SK-N-SH (cell line): ENCODE measurements at regions of chr2 and their contacts with region 1.

Region 1: DNA sequence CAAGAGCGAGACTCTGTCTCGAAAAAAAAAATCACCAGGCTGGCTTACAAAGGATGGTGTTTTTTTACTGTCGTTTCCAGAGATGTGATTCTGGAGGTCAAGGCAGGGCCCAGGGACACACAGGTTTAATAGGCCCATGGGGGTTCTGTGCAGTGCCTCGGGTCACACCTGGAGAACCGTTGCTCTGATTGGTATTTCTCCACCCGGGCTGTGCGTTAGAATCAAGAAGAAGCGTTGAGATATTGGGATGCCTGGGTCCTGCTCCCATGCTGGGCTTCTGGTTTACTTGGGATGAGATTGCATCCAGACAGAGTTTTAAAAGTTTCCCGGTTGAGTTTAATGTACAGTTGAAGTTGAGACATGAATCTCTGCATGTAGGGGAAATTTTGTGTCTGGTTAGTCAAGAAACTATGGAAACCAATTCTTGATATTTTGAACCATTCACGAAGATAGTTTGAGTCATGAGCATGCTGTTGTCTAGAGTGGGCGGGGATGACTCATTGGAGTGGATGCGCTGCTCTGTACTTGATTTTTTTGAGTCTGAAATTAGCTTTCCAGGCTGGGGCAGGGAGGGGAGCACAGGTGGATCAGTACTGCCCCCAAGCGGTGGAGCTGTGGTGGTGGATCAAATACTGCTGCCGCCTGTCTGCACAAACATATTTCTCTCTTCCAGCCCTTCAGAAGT is 50.1 kb downstream of the GREB1 start:
- DNase-seq: peak; percentile 95
- H3K4me3 ChIP-seq: no peak overlapping the region; a peak in 1 of 4 replicates
- H3K27ac ChIP-seq: peak overlapping the region in 1 of 2 experiments; percentile 80; a peak in 2 of 4 replicates
- H3K4me1 ChIP-seq: no peaks in the 10 kb centered on the region; a peak in 2 of 4 replicates
- H3K27me3 ChIP-seq: no peaks in the 10 kb centered on the region
- CTCF ChIP-seq: peak; percentile 100
- EP300 ChIP-seq: peak in 1 of 2 experiments; percentile 12; a peak in 1 of 4 replicates
- RAD21 ChIP-seq: peak; percentile 100

Region 2: GRCh38 chr2:10750610-10751009 is 833.4 kb before region 1 on chr2:
- CTCF ChIA-PET with region 1: no interaction called
- POLR2A ChIA-PET with region 1: no interaction called
- DNase-seq: no peak
- H3K4me3 ChIP-seq: no peak overlapping the region
- H3K27ac ChIP-seq: no peak overlapping the region
- H3K4me1 ChIP-seq: no peaks in the 10 kb centered on the region
- H3K27me3 ChIP-seq: no peaks in the 10 kb centered on the region; the same call in 1 of the 2 replicates
- CTCF ChIP-seq: no peak
- EP300 ChIP-seq: no peak
- RAD21 ChIP-seq: no peak

Region 3: GRCh38 chr2:11411768-11412448 is 172.1 kb before region 1 on chr2:
- CTCF ChIA-PET with region 1: interaction called, 12 read pairs
- POLR2A ChIA-PET with region 1: no interaction called
- DNase-seq: peak; percentile 85
- H3K4me3 ChIP-seq: peak overlapping the region; percentile 46 to 49
- H3K27ac ChIP-seq: no peak overlapping the region
- H3K4me1 ChIP-seq: peaks cover 0 to 9% of the 10 kb centered on the region in 2 experiments; a peak in 1 of 4 replicates
- H3K27me3 ChIP-seq: no peaks in the 10 kb centered on the region
- CTCF ChIP-seq: peak; percentile 96
- EP300 ChIP-seq: no peak
- RAD21 ChIP-seq: peak; percentile 97

Region 4: GRCh38 chr2:11498543-11499080 is 85.4 kb before region 1 on chr2:
- CTCF ChIA-PET with region 1: interaction called, 170 read pairs
- POLR2A ChIA-PET with region 1: no interaction called
- DNase-seq: peak; percentile 80
- H3K4me3 ChIP-seq: no peak overlapping the region; a peak in 1 of 4 replicates
- H3K27ac ChIP-seq: peak overlapping the region in 1 of 2 experiments; percentile 76; a peak in 2 of 4 replicates
- H3K4me1 ChIP-seq: peaks cover 0 to 26% of the 10 kb centered on the region in 2 experiments; a peak in 2 of 4 replicates
- H3K27me3 ChIP-seq: no peaks in the 10 kb centered on the region
- CTCF ChIP-seq: no peak
- EP300 ChIP-seq: no peak
- RAD21 ChIP-seq: no peak

Region 5: DNA sequence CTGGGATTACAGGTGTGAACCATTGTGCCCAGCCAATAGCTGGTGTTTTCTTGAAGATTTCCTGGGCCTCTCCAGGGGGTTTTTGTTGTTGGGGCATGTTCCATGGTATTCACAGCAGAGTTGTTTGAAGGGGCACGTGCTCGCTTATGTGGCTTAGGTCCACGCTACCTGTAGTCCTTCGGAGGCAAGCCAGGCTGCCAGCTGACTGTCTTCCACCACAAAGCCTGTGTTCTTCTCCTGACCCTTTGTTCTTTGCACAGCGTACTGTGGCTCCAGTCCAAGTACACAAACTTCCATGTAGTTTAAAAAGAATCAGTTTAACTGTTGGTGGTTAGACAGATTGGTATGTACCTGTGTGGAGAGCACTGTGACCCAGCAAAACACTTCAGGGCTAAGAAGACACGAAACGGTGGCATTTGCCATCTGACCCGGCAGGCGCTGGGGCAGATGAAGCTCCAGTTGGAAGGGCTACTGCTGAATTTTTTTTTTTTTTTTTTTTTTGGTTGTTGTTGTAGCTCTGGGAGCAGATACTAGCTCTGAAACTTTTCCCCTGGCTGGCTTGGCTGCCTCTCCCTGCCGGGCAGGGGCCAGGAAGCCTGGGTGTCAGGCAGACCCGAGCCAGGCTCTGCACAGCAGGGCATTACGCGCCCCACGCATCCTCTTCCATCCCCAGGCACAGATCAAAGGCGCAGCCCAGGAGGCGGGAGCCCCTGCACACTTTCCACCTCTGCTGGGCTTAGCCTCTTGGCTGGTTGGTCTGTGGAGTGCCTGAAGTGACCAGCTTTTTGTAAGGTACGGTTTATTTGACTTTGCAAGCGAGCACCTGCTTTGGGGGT is 44.4 kb before region 1 on chr2:
- CTCF ChIA-PET with region 1: interaction called, 34 read pairs
- POLR2A ChIA-PET with region 1: no interaction called
- DNase-seq: no peak
- H3K4me3 ChIP-seq: no peak overlapping the region
- H3K27ac ChIP-seq: no peak overlapping the region
- H3K4me1 ChIP-seq: peaks cover 0 to 43% of the 10 kb centered on the region in 2 experiments; a peak in 2 of 4 replicates
- H3K27me3 ChIP-seq: peaks cover 16% of the 10 kb centered on the region; the same call in 1 of the 2 replicates
- CTCF ChIP-seq: no peak
- EP300 ChIP-seq: no peak
- RAD21 ChIP-seq: no peak

Region 6: DNA sequence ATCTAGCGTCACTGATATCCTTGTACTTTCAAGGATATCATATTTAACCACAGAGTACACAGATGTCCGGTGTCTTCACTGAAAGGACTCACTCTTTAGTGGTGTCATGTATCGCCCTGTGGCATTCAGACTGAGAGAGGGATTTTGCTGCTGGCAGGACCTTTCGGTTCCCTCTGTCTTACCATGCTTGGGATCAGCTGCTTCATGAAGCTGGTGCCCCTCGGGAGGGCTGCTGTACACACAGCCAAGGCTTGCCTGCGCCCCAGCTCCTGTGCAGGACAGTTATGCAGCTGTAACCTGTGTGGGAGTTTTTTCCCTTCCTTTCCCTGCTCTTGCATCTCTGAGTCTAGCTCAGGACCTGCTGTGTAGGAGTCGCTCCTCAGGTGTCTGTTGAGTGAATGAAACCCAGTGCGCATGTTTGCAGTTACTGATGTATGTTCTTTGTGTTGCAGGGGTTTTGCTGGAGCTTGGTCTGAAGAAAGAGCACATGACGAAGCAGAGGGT is 14.3 kb after region 1 on chr2:
- CTCF ChIA-PET with region 1: interaction called, 119 read pairs
- POLR2A ChIA-PET with region 1: no interaction called
- DNase-seq: no peak
- H3K4me3 ChIP-seq: no peak overlapping the region
- H3K27ac ChIP-seq: no peak overlapping the region
- H3K4me1 ChIP-seq: no peaks in the 10 kb centered on the region
- H3K27me3 ChIP-seq: no peaks in the 10 kb centered on the region
- CTCF ChIP-seq: no peak
- EP300 ChIP-seq: no peak
- RAD21 ChIP-seq: no peak

Region 7: DNA sequence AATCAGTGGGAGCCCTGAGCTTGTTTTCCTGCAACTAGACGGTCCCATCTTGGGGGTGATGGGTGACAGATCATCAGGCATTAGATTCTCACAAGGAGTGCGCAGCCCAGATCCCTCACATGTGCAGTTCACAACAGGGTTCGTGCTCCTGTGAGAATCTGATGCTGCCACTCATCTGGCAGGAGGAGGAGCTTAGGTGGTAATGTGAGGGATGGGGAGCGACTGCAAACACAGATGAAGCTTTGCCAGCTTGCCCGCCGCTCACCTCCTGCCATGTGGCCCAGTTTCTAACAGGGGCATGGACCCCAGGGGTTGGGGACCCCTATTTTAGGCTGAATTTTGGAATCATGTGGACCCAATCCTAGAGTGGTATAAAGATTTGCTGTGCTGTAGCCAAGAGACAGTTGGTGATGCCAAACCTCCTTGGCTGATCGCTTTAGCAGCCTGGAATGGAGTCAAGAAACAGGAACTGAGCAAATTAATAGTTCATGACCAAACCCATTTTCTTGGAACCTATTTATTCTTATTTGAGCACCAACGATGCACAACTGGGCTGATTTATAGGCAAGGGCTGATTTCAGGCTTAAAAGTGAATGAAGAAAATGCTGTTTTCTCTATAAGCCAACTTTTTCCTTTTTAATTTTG is 188.1 kb after region 1 on chr2:
- CTCF ChIA-PET with region 1: no interaction called
- POLR2A ChIA-PET with region 1: no interaction called
- DNase-seq: no peak
- H3K4me3 ChIP-seq: no peak overlapping the region
- H3K27ac ChIP-seq: no peak overlapping the region
- H3K4me1 ChIP-seq: peaks cover 6 to 24% of the 10 kb centered on the region in 2 experiments; a peak in 2 of 4 replicates
- H3K27me3 ChIP-seq: no peaks in the 10 kb centered on the region
- CTCF ChIP-seq: no peak
- EP300 ChIP-seq: no peak
- RAD21 ChIP-seq: no peak

Region 8: GRCh38 chr2:11829947-11830707 is 246.1 kb after region 1 on chr2:
- CTCF ChIA-PET with region 1: no interaction called
- POLR2A ChIA-PET with region 1: no interaction called
- DNase-seq: peak; percentile 85
- H3K4me3 ChIP-seq: peak overlapping the region; percentile 27 to 32
- H3K27ac ChIP-seq: peak overlapping the region; percentile 94 to 95
- H3K4me1 ChIP-seq: peaks cover 38 to 40% of the 10 kb centered on the region in 2 experiments
- H3K27me3 ChIP-seq: no peaks in the 10 kb centered on the region
- CTCF ChIP-seq: peak; percentile 61
- EP300 ChIP-seq: peak in 1 of 2 experiments; percentile 99; a peak in 2 of 4 replicates
- RAD21 ChIP-seq: peak; percentile 85